ENCODE measurements at regions of chr2 and their contacts with region 1.

Region 1: DNA sequence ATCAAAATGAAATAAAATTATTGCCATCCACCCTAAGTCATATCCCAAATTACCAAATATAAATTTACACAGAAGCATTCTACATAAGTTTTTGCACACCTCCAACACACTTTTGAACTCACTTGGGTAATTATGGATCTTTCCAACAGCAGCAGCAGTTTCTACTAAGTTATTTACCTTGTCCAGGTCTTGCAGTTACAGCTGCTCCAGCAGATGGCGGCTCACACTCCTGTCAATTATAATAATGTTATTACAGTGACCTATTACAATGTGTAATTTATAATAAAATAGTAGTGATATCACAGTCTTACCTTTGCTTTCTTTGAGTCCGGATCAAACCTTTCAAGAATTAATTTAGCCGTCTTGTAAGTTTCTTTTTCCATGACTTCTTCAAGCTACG is 37.9 kb downstream of the LNPK start:
- DNase-seq: peak; percentile 9
- H3K4me3 Mint-ChIP-seq: no peak overlapping the region
- H3K27ac Mint-ChIP-seq: no peak overlapping the region
- H3K4me1 Mint-ChIP-seq: no peaks in the 10 kb centered on the region
- H3K27me3 Mint-ChIP-seq: no peaks in the 10 kb centered on the region
- CTCF ChIP-seq: no peak

Region 2: DNA sequence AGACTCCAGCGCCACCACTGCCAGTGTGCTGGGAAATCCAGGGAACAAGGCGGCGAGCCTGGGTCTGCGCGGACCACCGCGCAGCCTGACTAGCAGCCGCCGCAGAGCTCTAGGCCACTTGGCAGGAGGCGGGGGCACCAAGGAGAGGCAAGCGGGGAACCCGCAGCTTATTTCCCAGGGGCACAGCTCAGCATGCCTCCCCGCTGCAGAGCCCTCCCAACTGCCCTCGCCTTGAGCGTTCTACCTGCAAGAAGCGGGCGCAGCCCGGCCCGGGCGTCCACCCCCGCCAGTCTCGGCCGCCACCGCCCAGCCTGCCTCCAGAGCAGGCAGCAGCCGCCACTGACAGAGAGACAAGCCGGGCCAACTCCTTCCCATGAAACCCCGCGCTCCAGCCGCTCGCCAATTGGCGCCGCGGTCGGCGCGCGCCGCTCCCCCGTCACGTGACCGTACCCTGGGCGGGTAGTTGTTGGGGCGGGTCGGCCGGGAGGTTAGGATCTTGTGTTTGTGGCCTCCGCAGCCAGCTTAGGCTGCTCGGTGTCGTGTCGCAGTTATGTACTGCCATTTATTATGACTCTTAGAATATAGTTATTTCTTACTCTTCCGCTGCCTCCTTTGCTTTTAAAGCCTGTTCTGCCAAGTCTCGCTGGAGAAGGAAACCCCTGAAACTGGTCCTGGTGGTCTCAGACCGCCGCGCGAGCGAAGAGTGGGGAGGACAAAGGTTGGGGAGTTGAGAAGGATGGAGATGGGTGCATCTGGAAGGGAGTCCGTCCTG is 37.9 kb after region 1 on chr2 and contains the start of gene LNPK:
- CTCF ChIA-PET with region 1: no interaction called
- intact Hi-C with region 1: loop called (anchors 5 kb)
- DNase-seq: peak; percentile 92
- H3K4me3 Mint-ChIP-seq: peak within 1 kb of the TSS; percentile 93
- H3K27ac Mint-ChIP-seq: peak within 1 kb of the TSS; percentile 76
- H3K4me1 Mint-ChIP-seq: peaks cover 30% of the 10 kb centered on the region
- H3K27me3 Mint-ChIP-seq: no peaks in the 10 kb centered on the region
- CTCF ChIP-seq: no peak
- total RNA-seq, gene LNPK: 24.6 and 31.1 TPM in 2 replicates

Region 3: DNA sequence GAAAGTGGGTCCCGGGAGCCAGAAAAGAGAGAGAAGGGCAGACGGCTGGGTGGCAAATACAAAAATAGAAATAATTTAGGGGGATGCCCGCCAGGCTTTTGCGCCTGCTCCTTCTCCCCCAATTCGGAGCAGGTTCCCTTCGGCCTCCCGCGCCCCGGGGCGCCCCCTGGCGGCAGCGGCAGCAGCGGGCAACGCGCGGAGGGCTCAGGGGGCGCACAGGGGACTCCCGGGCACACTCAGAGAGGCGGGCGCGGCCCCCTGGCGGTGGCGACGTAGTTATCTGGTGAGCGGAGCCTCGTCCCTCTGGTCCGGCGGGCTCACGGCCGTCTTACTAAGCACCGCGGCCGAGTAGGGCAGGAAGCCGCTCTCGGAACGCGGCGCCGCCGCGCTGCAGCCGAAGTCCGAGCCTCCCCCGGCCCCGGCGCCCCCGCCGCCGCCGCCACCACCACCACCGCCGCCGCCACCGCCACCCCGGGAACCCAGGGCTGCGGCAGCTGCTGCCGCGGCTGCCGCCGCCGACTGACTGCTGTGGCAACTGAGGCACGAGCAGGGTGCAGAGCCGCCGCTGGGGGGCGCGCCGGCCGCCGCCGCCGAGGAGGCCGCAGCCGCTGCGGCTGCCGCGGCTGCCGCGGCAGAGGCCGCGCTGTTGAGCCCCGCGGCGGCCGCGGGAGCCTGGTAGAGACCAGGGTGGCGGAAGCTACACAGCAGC is 115.8 kb after region 1 on chr2:
- CTCF ChIA-PET with region 1: no interaction called
- intact Hi-C with region 1: loop called (anchors 10 kb)
- DNase-seq: peak; percentile 79
- H3K4me3 Mint-ChIP-seq: peak overlapping the region; percentile 86
- H3K27ac Mint-ChIP-seq: no peak overlapping the region
- H3K4me1 Mint-ChIP-seq: peaks cover 8% of the 10 kb centered on the region
- H3K27me3 Mint-ChIP-seq: peaks cover 34% of the 10 kb centered on the region
- CTCF ChIP-seq: peak; percentile 93

Measured in Calu3 (cell line).